ENCODE measurements at regions of chr5 and their contacts with region 1.

Region 1: DNA sequence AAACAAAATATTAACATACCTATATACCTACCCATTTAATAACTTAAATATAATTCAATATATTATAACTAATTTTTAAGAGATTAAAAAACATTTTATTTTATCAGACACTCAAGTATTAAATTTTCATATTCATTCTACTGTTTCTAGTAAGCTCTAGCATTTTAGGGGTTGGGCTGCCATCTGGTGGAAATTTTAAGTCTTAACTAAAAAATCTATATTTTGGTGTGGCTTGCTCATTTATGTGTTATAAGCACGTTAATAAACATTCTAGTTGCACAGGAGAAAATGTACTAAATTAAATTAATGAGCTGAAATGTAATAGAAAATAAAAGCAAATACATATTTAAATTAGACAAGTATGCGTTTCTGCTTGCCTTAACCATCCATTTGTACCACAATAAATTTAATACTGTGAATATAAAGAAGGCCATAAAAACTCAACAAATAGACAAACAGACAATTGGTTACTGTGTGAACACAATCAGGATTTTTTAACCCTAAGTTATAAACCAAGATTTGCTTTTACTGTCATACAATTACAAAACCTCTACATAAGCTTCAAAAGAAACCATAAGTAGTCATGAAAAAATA is 1728.3 kb upstream of the CDH9 start:
- DNase-seq: peak in 1 of 2 experiments; percentile 23
- H3K4me3 ChIP-seq: no peak overlapping the region
- H3K27ac ChIP-seq: no peak overlapping the region
- H3K4me1 ChIP-seq: no peaks in the 10 kb centered on the region
- H3K27me3 ChIP-seq: no peaks in the 10 kb centered on the region
- CTCF ChIP-seq: peak; percentile 65

Region 2: GRCh38 chr5:27020973-27021372 is 1745.7 kb before region 1 on chr5:
- CTCF ChIA-PET with region 1: no interaction called
- POLR2A ChIA-PET with region 1: no interaction called
- intact Hi-C with region 1: loop called (anchors 5 kb)
- DNase-seq: no peak
- H3K4me3 ChIP-seq: no peak overlapping the region
- H3K27ac ChIP-seq: no peak overlapping the region
- H3K4me1 ChIP-seq: no peaks in the 10 kb centered on the region
- H3K27me3 ChIP-seq: no peaks in the 10 kb centered on the region
- CTCF ChIP-seq: peak; percentile 51

Region 3: GRCh38 chr5:27938989-27939388 is 827.7 kb before region 1 on chr5:
- CTCF ChIA-PET with region 1: no interaction called
- POLR2A ChIA-PET with region 1: no interaction called
- intact Hi-C with region 1: loop called (anchors 5 kb)
- DNase-seq: no peak
- H3K4me3 ChIP-seq: no peak overlapping the region
- H3K27ac ChIP-seq: no peak overlapping the region
- H3K4me1 ChIP-seq: no peaks in the 10 kb centered on the region
- H3K27me3 ChIP-seq: no peaks in the 10 kb centered on the region
- CTCF ChIP-seq: no peak

Region 4: DNA sequence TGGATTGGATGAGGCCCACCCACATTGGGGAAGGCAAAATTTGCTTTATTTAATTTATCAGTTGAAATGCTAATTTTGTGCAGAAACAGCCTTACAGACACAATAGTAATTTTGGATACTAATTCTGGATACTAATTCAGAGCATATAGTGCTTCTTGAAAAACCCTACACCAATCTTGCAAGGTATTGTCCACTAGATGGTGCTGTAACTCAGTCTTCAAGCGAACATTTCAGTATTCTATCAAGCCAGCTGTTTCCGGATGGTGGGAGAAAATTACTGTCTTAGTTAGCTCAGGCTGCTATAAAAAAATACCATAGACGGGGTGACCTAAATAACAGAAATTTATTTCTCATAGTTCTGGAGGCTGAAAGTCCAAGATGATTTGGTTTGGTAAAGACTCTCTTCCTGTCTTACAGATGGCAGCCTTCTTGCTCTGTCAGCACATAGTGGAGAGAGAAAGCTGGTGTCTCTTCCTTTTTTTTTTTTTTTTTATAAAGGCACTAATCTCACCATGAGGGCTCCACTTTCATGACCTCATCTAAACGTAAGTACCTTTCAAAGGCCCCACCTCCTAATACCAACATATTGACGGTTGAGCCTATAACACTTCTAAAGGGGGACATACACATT is 421.7 kb before region 1 on chr5:
- CTCF ChIA-PET with region 1: no interaction called
- POLR2A ChIA-PET with region 1: no interaction called
- intact Hi-C with region 1: loop called (anchors 1 kb)
- DNase-seq: no peak
- H3K4me3 ChIP-seq: no peak overlapping the region
- H3K27ac ChIP-seq: no peak overlapping the region
- H3K4me1 ChIP-seq: no peaks in the 10 kb centered on the region
- H3K27me3 ChIP-seq: no peaks in the 10 kb centered on the region
- CTCF ChIP-seq: peak; percentile 84

Region 5: DNA sequence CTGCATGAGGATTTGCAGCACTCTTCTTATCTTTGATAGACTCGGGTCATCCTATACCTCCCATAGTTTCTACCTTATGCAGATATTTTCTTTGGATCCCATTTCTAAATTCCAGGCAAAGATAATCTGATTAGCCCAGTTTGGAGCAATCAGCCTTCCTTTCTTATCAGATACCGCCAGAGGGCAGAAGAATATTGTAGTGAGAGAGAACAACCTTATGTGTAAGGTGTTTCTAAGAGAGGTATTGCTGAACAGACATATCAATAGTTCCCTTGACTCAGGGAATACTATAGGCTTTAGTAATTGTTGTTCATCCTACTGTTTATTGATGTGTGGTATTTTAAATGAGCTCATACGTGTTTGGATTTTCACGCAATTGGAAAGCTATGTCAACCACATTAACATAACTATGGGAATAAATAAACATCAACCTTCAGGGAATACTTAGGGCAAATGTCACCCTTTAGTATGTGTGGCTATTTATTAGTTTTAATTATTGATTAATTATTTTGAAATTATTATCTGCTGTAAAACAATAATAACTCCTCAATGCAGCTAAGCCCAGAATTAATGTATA is 293.0 kb before region 1 on chr5:
- CTCF ChIA-PET with region 1: no interaction called
- POLR2A ChIA-PET with region 1: no interaction called
- intact Hi-C with region 1: loop called (anchors 1 kb)
- DNase-seq: no peak
- H3K4me3 ChIP-seq: no peak overlapping the region
- H3K27ac ChIP-seq: no peak overlapping the region
- H3K4me1 ChIP-seq: no peaks in the 10 kb centered on the region
- H3K27me3 ChIP-seq: no peaks in the 10 kb centered on the region
- CTCF ChIP-seq: peak; percentile 66

Region 6: GRCh38 chr5:28729067-28729466 is 37.6 kb before region 1 on chr5:
- CTCF ChIA-PET with region 1: no interaction called
- POLR2A ChIA-PET with region 1: no interaction called
- intact Hi-C with region 1: no loop called
- DNase-seq: no peak
- H3K4me3 ChIP-seq: no peak overlapping the region
- H3K27ac ChIP-seq: no peak overlapping the region
- H3K4me1 ChIP-seq: no peaks in the 10 kb centered on the region
- H3K27me3 ChIP-seq: no peaks in the 10 kb centered on the region
- CTCF ChIP-seq: no peak

Region 7: GRCh38 chr5:28743182-28744110 is 23.2 kb before region 1 on chr5:
- CTCF ChIA-PET with region 1: no interaction called
- POLR2A ChIA-PET with region 1: no interaction called
- intact Hi-C with region 1: no loop called
- DNase-seq: no peak
- H3K4me3 ChIP-seq: no peak overlapping the region
- H3K27ac ChIP-seq: no peak overlapping the region
- H3K4me1 ChIP-seq: no peaks in the 10 kb centered on the region
- H3K27me3 ChIP-seq: no peaks in the 10 kb centered on the region
- CTCF ChIP-seq: no peak

Measured in PC-9 (cell line).